Right ventricle myocardium superior (tissue), 1 donor: ENCODE measurements at regions of chr17 and their contacts with region 1.

Region 1: GRCh38 chr17:1275962-1276736 is 3.3 kb upstream of the TRARG1 start:
- DNase-seq: peak; percentile 81
- ATAC-seq: peak; percentile 78

Region 2: GRCh38 chr17:1029196-1029921 is 246.8 kb before region 1 on chr17:
- intact Hi-C with region 1: no loop called
- DNase-seq: no peak
- ATAC-seq: peak; percentile 6

Region 3: GRCh38 chr17:1186923-1187771 is 89.0 kb before region 1 on chr17:
- intact Hi-C with region 1: no loop called
- DNase-seq: peak; percentile 92
- ATAC-seq: peak; percentile 93

Region 4: GRCh38 chr17:1197781-1198490 is 78.2 kb before region 1 on chr17:
- intact Hi-C with region 1: no loop called
- DNase-seq: peak; percentile 89
- ATAC-seq: peak; percentile 66

Region 5: GRCh38 chr17:1229432-1229899 is 46.7 kb before region 1 on chr17:
- intact Hi-C with region 1: no loop called
- DNase-seq: peak; percentile 85
- ATAC-seq: peak; percentile 70

Region 6: GRCh38 chr17:1331708-1332107 is 55.6 kb after region 1 on chr17:
- intact Hi-C with region 1: loop called (anchors 5 kb)
- DNase-seq: peak; percentile 65
- ATAC-seq: peak; percentile 95